Calu3 (cell line): ENCODE measurements at regions of chr4 and their contacts with region 1.

Region 1: GRCh38 chr4:84258905-84259830 is 239.9 kb downstream of the NKX6-1 start:
- DNase-seq: peak; percentile 7
- H3K4me3 Mint-ChIP-seq: no peak overlapping the region
- H3K27ac Mint-ChIP-seq: no peak overlapping the region
- H3K4me1 Mint-ChIP-seq: no peaks in the 10 kb centered on the region
- H3K27me3 Mint-ChIP-seq: peaks cover 29% of the 10 kb centered on the region
- CTCF ChIP-seq: no peak

Region 2: GRCh38 chr4:83771113-83771705 is 488.0 kb before region 1 on chr4:
- CTCF ChIA-PET with region 1: no interaction called
- intact Hi-C with region 1: loop called (anchors 5 kb)
- DNase-seq: peak; percentile 38
- H3K4me3 Mint-ChIP-seq: no peak overlapping the region
- H3K27ac Mint-ChIP-seq: no peak overlapping the region
- H3K4me1 Mint-ChIP-seq: no peaks in the 10 kb centered on the region
- H3K27me3 Mint-ChIP-seq: no peaks in the 10 kb centered on the region
- CTCF ChIP-seq: peak; percentile 46

Region 3: DNA sequence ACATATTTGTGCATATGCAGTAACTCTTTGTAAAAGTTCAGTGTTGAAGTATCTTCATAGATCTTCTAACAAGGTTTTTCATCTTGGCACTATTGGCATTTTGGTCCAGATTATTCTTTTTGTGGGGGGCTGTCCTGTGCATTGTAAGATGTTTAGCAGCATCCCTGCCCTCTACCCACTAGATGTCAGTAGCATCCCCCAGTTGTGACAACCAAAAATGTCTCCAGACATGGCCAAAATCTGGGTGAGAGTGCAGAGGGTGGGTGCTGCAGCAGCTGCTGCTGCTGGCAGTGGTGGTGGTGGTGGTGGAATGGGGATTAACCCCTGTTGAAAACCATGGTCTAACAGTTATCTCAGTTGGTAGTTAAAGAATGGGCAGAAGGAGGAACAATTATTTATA is 353.2 kb before region 1 on chr4:
- CTCF ChIA-PET with region 1: no interaction called
- intact Hi-C with region 1: loop called (anchors 2 kb)
- DNase-seq: no peak
- H3K4me3 Mint-ChIP-seq: no peak overlapping the region
- H3K27ac Mint-ChIP-seq: no peak overlapping the region
- H3K4me1 Mint-ChIP-seq: no peaks in the 10 kb centered on the region
- H3K27me3 Mint-ChIP-seq: peaks cover 22% of the 10 kb centered on the region
- CTCF ChIP-seq: no peak

Region 4: DNA sequence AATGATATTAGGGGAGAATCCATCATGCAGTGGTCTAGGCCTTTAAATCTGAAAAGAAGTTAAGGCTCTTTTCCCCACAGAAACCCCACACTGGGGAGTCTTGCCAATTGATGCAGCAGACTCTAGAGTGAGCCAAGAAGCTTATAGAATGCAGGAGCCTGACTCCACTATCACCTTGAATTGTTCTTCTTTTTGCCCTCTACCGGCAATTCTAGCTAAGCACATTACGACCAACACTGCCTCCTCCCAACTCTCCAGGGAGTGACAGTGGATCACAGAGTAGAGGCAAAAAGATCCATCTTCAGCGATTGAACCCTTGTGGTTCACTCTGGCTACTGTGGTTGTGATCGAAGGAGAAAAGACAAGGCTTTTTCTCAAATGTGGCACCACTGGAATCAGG is 91.6 kb before region 1 on chr4:
- CTCF ChIA-PET with region 1: no interaction called
- intact Hi-C with region 1: no loop called
- DNase-seq: peak; percentile 1
- H3K4me3 Mint-ChIP-seq: no peak overlapping the region
- H3K27ac Mint-ChIP-seq: no peak overlapping the region
- H3K4me1 Mint-ChIP-seq: no peaks in the 10 kb centered on the region
- H3K27me3 Mint-ChIP-seq: peaks cover 24% of the 10 kb centered on the region
- CTCF ChIP-seq: no peak